HCT116 (cell line): ENCODE measurements at regions of chr16 and their contacts with region 1.

Region 1: GRCh38 chr16:30957456-30958174 is at the start of gene SETD1A:
- DNase-seq: peak; percentile 90
- ATAC-seq: peak; percentile 79
- H3K4me3 ChIP-seq: peak within 1 kb of the TSS; percentile 74 to 88
- H3K27ac ChIP-seq: peak within 1 kb of the TSS; percentile 100
- H3K4me1 ChIP-seq: peaks cover 22 to 32% of the 10 kb centered on the region in 2 experiments
- H3K27me3 ChIP-seq: no peaks in the 10 kb centered on the region
- CTCF ChIP-seq: no peak
- POLR2A ChIP-seq: no peak
- RAD21 ChIP-seq: no peak
- total RNA-seq, gene SETD1A: 26.9 TPM

Region 2: DNA sequence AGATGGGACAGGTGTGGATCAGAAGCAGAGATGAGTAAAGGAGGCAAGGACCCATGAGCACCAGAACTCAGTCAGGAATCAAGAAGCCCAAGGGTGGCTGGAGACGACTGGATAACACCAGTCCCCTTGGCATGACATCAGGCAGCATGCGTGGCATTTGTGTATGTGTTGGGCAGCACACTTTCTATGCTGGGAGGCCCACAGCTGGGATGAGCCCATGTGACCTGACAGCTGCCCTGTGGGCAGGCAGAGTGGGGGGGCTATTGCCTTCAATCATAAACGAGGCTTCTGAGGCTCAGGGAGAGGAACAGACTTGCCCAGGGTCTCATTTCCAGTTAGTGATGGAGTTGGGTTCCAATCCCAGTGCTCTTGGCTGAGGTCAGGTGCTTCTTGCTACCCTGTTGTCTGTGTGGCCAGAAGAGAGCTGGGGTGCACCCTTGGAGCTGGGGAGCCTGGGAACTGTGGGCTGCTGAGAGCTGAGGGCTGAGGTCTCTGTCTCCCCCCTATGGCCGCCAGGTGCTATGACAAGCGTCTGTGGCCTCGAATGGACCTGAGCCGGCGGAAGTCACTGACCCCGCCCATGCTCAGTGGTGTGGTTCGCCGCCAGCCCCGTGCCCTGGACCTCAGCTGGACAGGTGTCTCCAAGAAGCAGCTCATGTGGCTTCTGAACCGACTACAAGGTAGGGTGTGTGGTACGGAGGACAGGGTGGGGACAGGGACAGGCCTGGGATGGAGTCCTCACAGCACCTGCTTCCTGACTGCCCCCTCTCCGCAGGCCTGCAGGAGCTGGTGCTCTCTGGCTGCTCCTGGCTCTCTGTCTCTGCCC is 15.8 kb before region 1 on chr16:
- CTCF ChIA-PET with region 1: interaction called, 13 read pairs
- POLR2A ChIA-PET with region 1: interaction called, 3 read pairs
- RAD21 ChIA-PET with region 1: no interaction called
- intact Hi-C with region 1: no loop called
- DNase-seq: peak; percentile 46
- ATAC-seq: peak; percentile 98
- H3K4me3 ChIP-seq: no peak overlapping the region
- H3K27ac ChIP-seq: peak overlapping the region; percentile 38; the same call in 1 of the 2 replicates
- H3K4me1 ChIP-seq: peaks cover 5 to 12% of the 10 kb centered on the region in 2 experiments; a peak in 3 of 4 replicates
- H3K27me3 ChIP-seq: no peaks in the 10 kb centered on the region
- CTCF ChIP-seq: peak in 2 of 3 experiments; percentile 90 to 98; a peak in 5 of 6 replicates
- POLR2A ChIP-seq: no peak
- RAD21 ChIP-seq: peak; percentile 84

Region 3: DNA sequence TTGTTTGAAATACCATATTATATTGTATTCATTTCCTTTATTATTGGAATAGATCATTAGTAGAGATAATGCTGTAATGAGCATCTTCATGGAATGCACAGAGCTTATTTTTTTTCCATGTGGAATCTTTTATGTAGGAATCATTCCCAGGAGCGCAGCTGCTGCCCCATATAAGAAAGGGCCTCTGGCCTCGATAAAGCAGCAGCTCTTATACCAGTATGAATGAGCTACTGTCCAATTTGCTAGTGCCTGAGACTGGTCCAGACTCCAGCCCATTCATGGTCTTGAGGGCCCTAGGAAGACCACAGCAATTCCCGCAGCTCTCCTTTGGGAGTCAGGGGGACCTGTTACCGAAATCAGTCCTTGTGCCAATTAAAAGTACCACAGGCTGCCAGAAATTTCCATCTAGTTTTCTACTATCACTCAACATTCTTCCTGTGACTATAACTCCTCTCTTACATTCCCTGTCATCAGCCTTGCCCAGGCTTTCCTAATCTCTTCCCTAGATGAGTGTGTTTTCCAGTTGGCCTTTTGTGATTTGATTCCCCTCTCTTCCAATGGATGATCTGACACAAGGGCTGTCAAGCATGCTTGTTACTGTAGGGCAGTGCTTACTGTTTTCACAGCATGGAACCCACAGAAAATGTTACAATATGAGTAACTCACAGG is 483.0 kb after region 1 on chr16:
- CTCF ChIA-PET with region 1: interaction called, 13 read pairs
- POLR2A ChIA-PET with region 1: no interaction called
- RAD21 ChIA-PET with region 1: no interaction called
- intact Hi-C with region 1: loop called (anchors 10 kb)
- DNase-seq: no peak
- ATAC-seq: no peak
- H3K4me3 ChIP-seq: no peak overlapping the region
- H3K27ac ChIP-seq: no peak overlapping the region
- H3K4me1 ChIP-seq: peaks cover 5 to 18% of the 10 kb centered on the region in 2 experiments; a peak in 3 of 4 replicates
- H3K27me3 ChIP-seq: no peaks in the 10 kb centered on the region
- CTCF ChIP-seq: no peak
- POLR2A ChIP-seq: no peak
- RAD21 ChIP-seq: no peak

Region 4: DNA sequence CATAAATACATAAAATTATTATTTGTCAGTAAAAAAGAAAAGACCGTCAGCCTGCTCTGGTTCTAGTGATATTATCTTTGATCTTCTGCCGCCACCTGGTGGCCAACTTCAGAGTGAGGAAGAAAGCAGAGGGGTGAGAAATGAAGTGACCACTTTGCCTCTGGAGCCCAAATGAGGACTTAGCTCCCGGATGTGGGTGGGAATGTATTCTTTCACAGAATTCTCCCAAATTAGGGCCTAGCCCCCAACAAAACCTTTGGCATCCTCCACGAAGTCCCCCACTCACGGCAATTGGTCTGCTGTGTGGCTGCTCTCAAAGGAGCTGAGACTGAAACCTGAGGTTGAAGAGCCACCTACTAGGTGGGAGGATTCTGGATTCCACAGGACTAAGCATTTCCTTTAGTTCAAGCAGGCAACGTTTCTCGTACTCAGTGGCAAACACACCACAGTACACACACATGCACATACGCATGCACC is 911.1 kb after region 1 on chr16:
- CTCF ChIA-PET with region 1: interaction called, 12 read pairs
- POLR2A ChIA-PET with region 1: no interaction called
- RAD21 ChIA-PET with region 1: no interaction called
- intact Hi-C with region 1: no loop called
- DNase-seq: peak; percentile 73
- ATAC-seq: peak; percentile 84
- H3K4me3 ChIP-seq: no peak overlapping the region
- H3K27ac ChIP-seq: no peak overlapping the region
- H3K4me1 ChIP-seq: peaks cover 3 to 14% of the 10 kb centered on the region in 2 experiments; a peak in 2 of 4 replicates
- H3K27me3 ChIP-seq: no peaks in the 10 kb centered on the region
- CTCF ChIP-seq: peak; percentile 64 to 74 (median 73)
- POLR2A ChIP-seq: no peak
- RAD21 ChIP-seq: peak; percentile 83